ENCODE measurements at regions of chr7 and their contacts with region 1.

Region 1: GRCh38 chr7:26667500-26668133 is 196.8 kb downstream of the SKAP2 start:
- DNase-seq: peak; percentile 27 to 29
- ATAC-seq: peak; percentile 81 to 82
- H3K4me3 ChIP-seq: no peak overlapping the region
- H3K27ac ChIP-seq: no peak overlapping the region
- H3K4me1 ChIP-seq: peaks cover 0 to 5% of the 10 kb centered on the region in 2 donors
- H3K27me3 ChIP-seq: peaks cover 0 to 3% (median 0%) of the 10 kb centered on the region in 3 donors
- CTCF ChIP-seq: peak; percentile 44 to 74 (median 64)
- POLR2A ChIP-seq: no peak

Region 2: DNA sequence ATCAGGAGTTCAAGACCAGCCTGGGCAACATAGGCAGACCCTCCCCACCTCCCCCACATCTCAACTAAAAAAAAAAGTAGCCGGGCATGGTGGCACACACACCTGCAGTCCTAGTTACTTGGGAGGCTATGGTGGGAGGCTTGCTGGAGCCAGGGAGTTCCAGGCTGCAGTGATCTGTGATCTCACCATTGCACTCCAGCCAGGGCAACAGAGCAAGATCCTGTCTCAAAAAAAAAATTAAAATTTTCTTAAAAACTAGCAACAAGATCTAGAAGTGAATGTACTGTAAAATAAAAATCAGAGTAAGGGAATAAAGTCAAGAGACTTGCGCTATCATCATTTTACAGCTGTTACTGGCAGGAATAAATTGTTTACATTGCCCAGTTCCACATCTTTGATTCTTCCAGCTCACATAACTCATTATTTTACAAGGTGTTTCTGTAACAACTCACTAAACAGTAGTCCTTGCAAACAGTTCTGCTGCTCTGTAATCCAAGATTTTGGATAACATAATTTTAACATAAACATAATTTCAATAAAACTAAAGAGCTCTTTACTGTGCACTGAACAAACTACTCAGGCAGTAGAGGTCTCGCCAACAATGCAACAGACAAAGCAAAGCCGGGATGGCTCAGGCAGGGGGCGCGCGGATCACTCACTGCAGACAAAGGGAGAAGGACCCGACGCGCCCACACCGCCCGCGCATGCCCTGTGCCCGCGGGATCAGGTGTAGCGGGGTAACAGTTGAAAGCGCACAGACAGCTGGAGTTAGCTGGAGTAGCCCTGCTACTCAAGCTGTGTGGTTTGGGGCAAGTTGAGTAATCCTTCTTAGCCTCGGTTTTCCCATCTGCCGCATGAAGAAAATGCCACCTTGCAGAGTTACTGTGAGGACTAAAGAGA is 588.9 kb before region 1 on chr7:
- in situ Hi-C with region 1: loop called in 2 of 4 experiments (anchors 25 kb)
- intact Hi-C with region 1: no loop called
- DNase-seq: peak; percentile 14 to 35
- ATAC-seq: no peak
- H3K4me3 ChIP-seq: peak overlapping the region in 1 of 4 donors; percentile 31
- H3K27ac ChIP-seq: no peak overlapping the region
- H3K4me1 ChIP-seq: no peaks in the 10 kb centered on the region
- H3K27me3 ChIP-seq: peaks cover 15 to 36% (median 33%) of the 10 kb centered on the region in 3 donors
- CTCF ChIP-seq: no peak
- POLR2A ChIP-seq: no peak

Region 3: GRCh38 chr7:26090927-26091519 is 576.6 kb before region 1 on chr7:
- in situ Hi-C with region 1: loop called in 2 of 4 experiments (anchors 25 kb)
- intact Hi-C with region 1: loop called (anchors 10 kb)
- DNase-seq: no peak
- ATAC-seq: no peak
- H3K4me3 ChIP-seq: no peak overlapping the region
- H3K27ac ChIP-seq: no peak overlapping the region
- H3K4me1 ChIP-seq: no peaks in the 10 kb centered on the region
- H3K27me3 ChIP-seq: no peaks in the 10 kb centered on the region
- CTCF ChIP-seq: peak; percentile 33 to 58 (median 50)
- POLR2A ChIP-seq: no peak

Region 4: GRCh38 chr7:26743205-26743604 is 75.6 kb after region 1 on chr7:
- in situ Hi-C with region 1: no loop called
- intact Hi-C with region 1: no loop called
- DNase-seq: no peak
- ATAC-seq: no peak
- H3K4me3 ChIP-seq: no peak overlapping the region
- H3K27ac ChIP-seq: no peak overlapping the region
- H3K4me1 ChIP-seq: no peaks in the 10 kb centered on the region
- H3K27me3 ChIP-seq: no peaks in the 10 kb centered on the region
- CTCF ChIP-seq: no peak
- POLR2A ChIP-seq: no peak

Region 5: DNA sequence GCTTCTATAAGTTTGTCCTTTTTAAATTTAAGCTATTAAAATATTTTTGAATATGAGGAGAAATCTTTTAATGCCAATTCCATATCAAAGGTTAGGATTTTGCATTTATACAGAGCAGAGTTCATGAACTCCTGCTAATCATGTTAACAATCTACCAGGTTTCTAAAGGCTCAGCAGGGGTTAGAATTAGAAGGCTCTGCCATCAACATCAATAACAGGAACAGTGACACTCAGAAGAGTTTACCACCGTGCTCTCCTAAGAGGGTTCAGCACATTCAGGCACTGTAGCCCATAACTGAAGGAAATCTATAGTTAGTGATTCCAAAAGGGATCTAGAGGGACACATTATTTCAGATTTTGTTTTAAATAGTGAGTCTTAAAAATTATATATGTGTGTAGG is 328.0 kb after region 1 on chr7:
- in situ Hi-C with region 1: no loop called
- intact Hi-C with region 1: no loop called
- DNase-seq: no peak
- ATAC-seq: no peak
- H3K4me3 ChIP-seq: no peak overlapping the region
- H3K27ac ChIP-seq: no peak overlapping the region
- H3K4me1 ChIP-seq: no peaks in the 10 kb centered on the region
- H3K27me3 ChIP-seq: no peaks in the 10 kb centered on the region
- CTCF ChIP-seq: no peak
- POLR2A ChIP-seq: no peak